ENCODE measurements at regions of chr3 and their contacts with region 1.

Region 1: GRCh38 chr3:11271986-11272904 is at the start of gene ATG7:
- DNase-seq: peak; percentile 95 to 97 (median 96)
- H3K4me3 ChIP-seq: peak within 1 kb of the TSS; percentile 77 to 94
- H3K4me3 Mint-ChIP-seq: peak within 1 kb of the TSS; percentile 94 to 97 (median 96)
- H3K27ac ChIP-seq: peak within 1 kb of the TSS; percentile 84
- H3K27ac Mint-ChIP-seq: peak within 1 kb of the TSS; percentile 95 to 99 (median 98)
- H3K4me1 ChIP-seq: peaks cover 28% of the 10 kb centered on the region
- H3K4me1 Mint-ChIP-seq: peaks cover 37 to 59% (median 49%) of the 10 kb centered on the region in 4 donors
- H3K27me3 ChIP-seq: no peaks in the 10 kb centered on the region
- H3K27me3 Mint-ChIP-seq: no peaks in the 10 kb centered on the region
- total RNA-seq, gene ATG7: 32.5 to 32.8 TPM

Region 2: DNA sequence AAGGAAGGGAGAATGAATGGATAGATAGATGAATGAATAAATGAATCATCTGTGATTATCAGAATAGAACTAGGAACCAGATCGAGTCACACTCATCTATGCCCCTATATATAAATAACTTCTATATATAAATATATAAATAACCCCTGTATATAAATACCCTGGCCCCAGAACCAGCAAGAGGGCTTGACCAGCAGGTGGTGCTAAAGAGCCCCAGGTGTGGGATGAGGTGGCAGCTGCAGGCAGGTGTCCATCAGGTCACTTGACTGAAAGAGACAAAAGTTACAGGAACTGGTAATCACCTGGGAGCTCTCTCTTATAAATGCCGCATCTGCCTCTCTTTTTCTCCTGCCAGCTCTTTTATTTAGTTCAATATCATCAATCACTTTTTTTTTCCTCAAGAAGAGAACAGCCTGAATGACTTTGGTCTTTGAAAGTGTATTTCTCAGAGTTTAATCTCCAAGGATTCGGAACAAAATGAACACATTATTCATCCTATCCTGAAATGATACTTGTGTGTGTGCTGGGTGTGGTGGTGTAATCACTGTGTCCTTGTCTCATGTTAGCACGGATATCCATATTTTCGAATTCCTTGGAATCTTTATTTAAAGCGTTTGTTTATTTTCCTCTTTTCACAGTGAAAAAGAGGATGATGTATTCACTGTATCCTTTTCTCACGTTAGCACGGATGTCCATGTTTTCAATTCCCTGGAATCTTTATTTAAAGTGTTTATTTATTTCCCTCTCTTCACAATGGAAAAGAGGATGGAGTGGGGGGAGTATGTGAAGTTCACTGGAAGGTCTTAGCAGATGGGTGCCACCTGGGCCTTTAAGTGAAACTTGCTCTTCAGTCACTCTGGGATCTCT is 35.4 kb before region 1 on chr3:
- CTCF ChIA-PET with region 1: interaction called, 12 read pairs
- POLR2A ChIA-PET with region 1: no interaction called
- intact Hi-C with region 1: no loop called
- DNase-seq: peak; percentile 67 to 72 (median 70)
- H3K4me3 ChIP-seq: no peak overlapping the region
- H3K4me3 Mint-ChIP-seq: no peak overlapping the region
- H3K27ac ChIP-seq: no peak overlapping the region
- H3K27ac Mint-ChIP-seq: no peak overlapping the region
- H3K4me1 ChIP-seq: no peaks in the 10 kb centered on the region
- H3K4me1 Mint-ChIP-seq: peaks cover 0 to 2% (median 0%) of the 10 kb centered on the region in 4 donors
- H3K27me3 ChIP-seq: no peaks in the 10 kb centered on the region
- H3K27me3 Mint-ChIP-seq: peaks cover 4 to 8% of the 10 kb centered on the region in 2 donors

Region 3: GRCh38 chr3:11260460-11260859 is 11.8 kb before region 1 on chr3:
- CTCF ChIA-PET with region 1: no interaction called
- POLR2A ChIA-PET with region 1: no interaction called
- intact Hi-C with region 1: no loop called
- DNase-seq: no peak
- H3K4me3 ChIP-seq: no peak overlapping the region
- H3K4me3 Mint-ChIP-seq: no peak overlapping the region
- H3K27ac ChIP-seq: no peak overlapping the region
- H3K27ac Mint-ChIP-seq: no peak overlapping the region
- H3K4me1 ChIP-seq: no peaks in the 10 kb centered on the region
- H3K4me1 Mint-ChIP-seq: no peaks in the 10 kb centered on the region
- H3K27me3 ChIP-seq: no peaks in the 10 kb centered on the region
- H3K27me3 Mint-ChIP-seq: peaks cover 1 to 6% of the 10 kb centered on the region in 2 donors

Region 4: GRCh38 chr3:11288786-11289682 is 16.8 kb after region 1 on chr3:
- CTCF ChIA-PET with region 1: interaction called, 4 read pairs
- POLR2A ChIA-PET with region 1: interaction called, 61 read pairs
- intact Hi-C with region 1: loop called (anchors 2 kb)
- DNase-seq: no peak
- H3K4me3 ChIP-seq: no peak overlapping the region
- H3K4me3 Mint-ChIP-seq: peak overlapping the region in 5 of 8 donors; percentile 6 to 45 (median 25)
- H3K27ac ChIP-seq: peak overlapping the region; percentile 11
- H3K27ac Mint-ChIP-seq: peak overlapping the region; percentile 54 to 98 (median 85)
- H3K4me1 ChIP-seq: peaks cover 47% of the 10 kb centered on the region
- H3K4me1 Mint-ChIP-seq: peaks cover 39 to 65% (median 51%) of the 10 kb centered on the region in 4 donors
- H3K27me3 ChIP-seq: no peaks in the 10 kb centered on the region
- H3K27me3 Mint-ChIP-seq: no peaks in the 10 kb centered on the region

Region 5: DNA sequence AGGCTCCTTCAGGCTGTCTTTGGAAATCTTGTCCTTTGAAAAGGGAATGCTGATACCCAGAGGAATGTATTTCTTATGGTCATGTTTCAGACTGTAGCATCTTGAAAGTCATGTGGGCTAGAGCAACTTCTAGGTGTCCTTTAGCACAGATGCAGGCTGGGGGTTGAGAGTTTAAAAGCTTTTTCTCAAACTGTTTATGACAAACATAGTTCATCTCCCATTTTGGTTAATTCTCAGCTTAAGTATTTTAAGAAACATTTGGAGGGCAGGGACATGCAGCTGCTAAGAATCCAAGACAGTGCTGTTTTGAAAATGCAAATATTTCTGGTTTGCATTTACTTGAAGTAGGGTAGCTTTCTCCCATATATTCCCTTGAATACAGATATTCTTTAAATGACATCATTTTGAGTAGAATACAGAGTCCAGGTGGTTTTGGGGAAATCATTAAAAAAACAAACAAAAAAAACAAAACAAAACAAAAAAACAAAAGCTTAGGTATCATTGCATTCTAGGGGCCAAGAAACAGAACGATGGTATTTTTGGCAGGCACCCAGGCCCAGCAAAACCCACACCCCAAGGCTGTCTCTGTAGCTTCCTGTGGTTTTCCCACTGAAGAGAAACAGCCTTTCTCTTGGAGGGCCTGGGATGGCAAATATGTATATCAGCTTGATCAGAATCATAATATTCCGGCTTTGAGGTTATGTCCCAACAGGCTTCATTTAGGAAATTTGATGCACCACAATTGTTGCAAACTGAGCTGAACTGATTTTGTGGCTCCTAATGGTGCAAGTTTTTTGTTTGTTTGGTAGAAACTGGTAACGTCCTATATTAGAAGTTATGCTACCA is 120.0 kb after region 1 on chr3:
- CTCF ChIA-PET with region 1: no interaction called
- POLR2A ChIA-PET with region 1: no interaction called
- intact Hi-C with region 1: no loop called
- DNase-seq: no peak
- H3K4me3 ChIP-seq: no peak overlapping the region
- H3K4me3 Mint-ChIP-seq: no peak overlapping the region
- H3K27ac ChIP-seq: no peak overlapping the region
- H3K27ac Mint-ChIP-seq: peak overlapping the region in 4 of 7 donors; percentile 14 to 29 (median 24)
- H3K4me1 ChIP-seq: no peaks in the 10 kb centered on the region
- H3K4me1 Mint-ChIP-seq: peaks cover 12 to 36% (median 24%) of the 10 kb centered on the region in 4 donors
- H3K27me3 ChIP-seq: no peaks in the 10 kb centered on the region
- H3K27me3 Mint-ChIP-seq: no peaks in the 10 kb centered on the region

Region 6: GRCh38 chr3:11719406-11720230 is 447.4 kb after region 1 on chr3:
- CTCF ChIA-PET with region 1: no interaction called
- POLR2A ChIA-PET with region 1: no interaction called
- intact Hi-C with region 1: loop called (anchors 2 kb)
- DNase-seq: peak; percentile 76 to 87 (median 78)
- H3K4me3 ChIP-seq: peak overlapping the region in 1 of 2 donors; percentile 59
- H3K4me3 Mint-ChIP-seq: peak overlapping the region; percentile 64 to 97 (median 84)
- H3K27ac ChIP-seq: peak overlapping the region; percentile 64
- H3K27ac Mint-ChIP-seq: peak overlapping the region in 2 of 7 donors; percentile 59 to 70
- H3K4me1 ChIP-seq: peaks cover 14% of the 10 kb centered on the region
- H3K4me1 Mint-ChIP-seq: peaks cover 10 to 32% (median 23%) of the 10 kb centered on the region in 4 donors
- H3K27me3 ChIP-seq: no peaks in the 10 kb centered on the region
- H3K27me3 Mint-ChIP-seq: peaks cover 0 to 4% of the 10 kb centered on the region in 2 donors

Region 7: DNA sequence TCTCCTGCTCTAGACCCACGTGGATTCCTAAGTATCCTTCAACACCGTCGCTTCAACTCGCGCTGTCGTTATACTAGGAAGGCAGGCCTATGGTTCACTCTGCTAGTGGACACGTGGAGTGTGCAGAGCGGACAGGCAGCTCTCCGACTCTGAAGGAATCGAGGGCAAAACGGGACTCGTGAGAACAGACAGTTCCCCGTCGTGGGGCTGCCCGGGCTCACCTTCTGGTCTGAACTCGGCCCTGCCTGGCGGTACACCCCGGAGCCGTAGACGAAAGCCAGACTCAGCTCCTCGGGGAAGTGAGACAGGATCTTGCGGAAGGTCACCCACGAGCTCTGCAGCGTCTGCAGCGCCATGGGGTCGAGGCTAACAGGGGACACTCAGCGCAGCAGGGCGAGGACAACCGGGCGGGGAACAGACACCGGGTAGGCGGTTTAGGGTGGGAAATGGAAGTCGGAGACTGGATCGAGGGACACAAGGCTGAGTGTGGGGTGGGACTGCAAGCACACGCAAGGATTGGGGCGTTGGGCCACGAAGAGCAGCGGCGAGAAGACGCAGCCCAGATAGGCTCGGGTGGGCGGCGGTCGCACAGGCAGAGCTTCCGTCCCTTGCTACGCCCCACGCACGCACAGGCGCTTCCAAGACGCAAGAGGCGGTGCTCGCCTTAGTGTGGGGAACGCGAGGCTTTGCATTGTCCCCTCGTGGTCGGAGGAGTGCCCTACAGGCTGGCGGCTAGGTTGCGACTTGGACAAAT is 574.2 kb after region 1 on chr3 and contains the start of gene TAMM41:
- CTCF ChIA-PET with region 1: no interaction called
- POLR2A ChIA-PET with region 1: interaction called, 9 read pairs
- intact Hi-C with region 1: loop called (anchors 2 kb)
- DNase-seq: peak; percentile 85 to 90 (median 87)
- H3K4me3 ChIP-seq: peak within 1 kb of the TSS; percentile 79 to 92
- H3K4me3 Mint-ChIP-seq: peak within 1 kb of the TSS; percentile 96 to 99 (median 98)
- H3K27ac ChIP-seq: peak within 1 kb of the TSS; percentile 88
- H3K27ac Mint-ChIP-seq: peak within 1 kb of the TSS; percentile 87 to 99 (median 98)
- H3K4me1 ChIP-seq: peaks cover 30% of the 10 kb centered on the region
- H3K4me1 Mint-ChIP-seq: peaks cover 31 to 56% (median 40%) of the 10 kb centered on the region in 4 donors
- H3K27me3 ChIP-seq: no peaks in the 10 kb centered on the region
- H3K27me3 Mint-ChIP-seq: no peaks in the 10 kb centered on the region
- total RNA-seq, gene TAMM41: 47.0 to 52.2 TPM

Measured in CD4-positive, alpha-beta memory T cell (primary cell).